ENCODE measurements at regions of chr15 and their contacts with region 1.

Region 1: GRCh38 chr15:31977812-31978661 is 52.3 kb upstream of the CHRNA7 start:
- DNase-seq: no peak
- H3K4me3 ChIP-seq: no peak overlapping the region
- CTCF ChIP-seq: peak; percentile 93

Region 2: GRCh38 chr15:31758126-31758525 is 219.9 kb before region 1 on chr15:
- CTCF ChIA-PET with region 1: no interaction called
- POLR2A ChIA-PET with region 1: no interaction called
- DNase-seq: no peak
- H3K4me3 ChIP-seq: no peak overlapping the region
- CTCF ChIP-seq: no peak

Region 3: DNA sequence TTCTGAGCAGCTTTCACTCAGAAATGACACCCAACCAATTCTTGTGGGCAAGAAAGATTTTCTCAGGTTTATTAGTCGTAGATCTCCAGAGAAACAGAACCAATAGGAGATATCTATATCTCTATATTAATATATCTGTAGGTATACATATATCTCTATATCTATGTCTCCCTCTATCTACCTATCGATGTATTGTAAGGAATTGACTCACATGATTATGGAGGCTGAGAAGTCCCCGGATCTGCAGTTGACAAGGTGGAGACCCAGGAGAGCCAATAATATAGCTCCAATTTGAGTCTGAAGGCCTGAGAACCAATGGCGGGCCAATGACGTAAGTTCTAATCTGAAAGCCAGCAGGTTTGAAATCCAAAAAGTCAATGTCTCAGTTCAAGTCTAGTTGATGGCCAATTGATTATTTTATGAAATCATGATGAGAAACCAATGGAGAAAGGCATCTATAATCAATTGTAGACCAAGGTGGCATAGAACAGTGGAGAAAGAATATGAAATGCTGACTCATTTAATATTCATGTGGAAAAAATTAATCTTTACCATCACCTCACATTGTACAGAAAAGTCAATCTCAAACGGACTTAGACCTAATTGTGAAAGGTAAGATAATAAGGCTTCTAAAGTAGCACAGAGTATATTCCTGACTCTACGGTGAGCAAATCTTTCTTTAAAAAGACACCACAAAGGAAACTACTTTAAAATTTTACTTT is 13.3 kb before region 1 on chr15:
- CTCF ChIA-PET with region 1: interaction called, 26 read pairs
- POLR2A ChIA-PET with region 1: no interaction called
- DNase-seq: no peak
- H3K4me3 ChIP-seq: no peak overlapping the region
- CTCF ChIP-seq: no peak